Natural killer cell (primary cell): ENCODE measurements at regions of chr6 and their contacts with region 1.

Region 1: DNA sequence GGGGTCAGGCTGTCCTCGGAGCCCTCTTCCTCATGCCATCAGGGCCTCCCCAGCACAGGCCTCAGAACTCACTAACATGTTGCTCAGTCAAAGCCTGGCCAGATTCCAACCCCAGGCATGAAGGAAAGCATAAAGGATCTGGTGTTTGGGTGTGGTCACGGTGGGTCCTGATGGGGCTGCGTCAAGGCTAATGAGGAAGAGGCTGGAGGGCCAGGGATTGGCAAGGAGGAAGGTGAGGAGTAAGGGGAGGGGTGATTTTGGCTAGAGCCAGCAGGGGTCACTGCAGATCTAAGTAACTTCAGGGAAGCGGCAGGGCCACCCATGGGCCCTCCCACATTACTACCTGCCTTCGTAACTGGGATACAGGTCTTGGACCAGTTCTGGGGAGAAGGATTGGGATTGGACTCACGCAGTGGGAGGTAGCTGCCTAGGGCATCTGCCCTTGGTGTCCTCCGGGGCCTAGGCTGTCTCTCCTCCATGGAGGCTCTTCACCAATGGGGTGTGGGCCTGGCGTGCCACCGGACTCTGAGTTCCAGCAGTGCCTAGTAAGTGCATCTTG is 36.2 kb upstream of the MRPS18A start:
- DNase-seq: peak; percentile 57 to 85
- ATAC-seq: peak; percentile 68 to 77 (median 72)
- H3K4me3 ChIP-seq: no peak overlapping the region
- H3K4me3 Mint-ChIP-seq: no peak overlapping the region
- H3K27ac ChIP-seq: no peak overlapping the region
- H3K27ac Mint-ChIP-seq: peak overlapping the region in 1 of 2 donors; percentile 82
- H3K4me1 ChIP-seq: peaks cover 25% of the 10 kb centered on the region
- H3K4me1 Mint-ChIP-seq: peaks cover 14 to 25% of the 10 kb centered on the region in 2 donors
- H3K27me3 ChIP-seq: no peaks in the 10 kb centered on the region
- H3K27me3 Mint-ChIP-seq: peaks cover 11 to 18% of the 10 kb centered on the region in 2 donors
- CTCF ChIP-seq: peak; percentile 58

Region 2: DNA sequence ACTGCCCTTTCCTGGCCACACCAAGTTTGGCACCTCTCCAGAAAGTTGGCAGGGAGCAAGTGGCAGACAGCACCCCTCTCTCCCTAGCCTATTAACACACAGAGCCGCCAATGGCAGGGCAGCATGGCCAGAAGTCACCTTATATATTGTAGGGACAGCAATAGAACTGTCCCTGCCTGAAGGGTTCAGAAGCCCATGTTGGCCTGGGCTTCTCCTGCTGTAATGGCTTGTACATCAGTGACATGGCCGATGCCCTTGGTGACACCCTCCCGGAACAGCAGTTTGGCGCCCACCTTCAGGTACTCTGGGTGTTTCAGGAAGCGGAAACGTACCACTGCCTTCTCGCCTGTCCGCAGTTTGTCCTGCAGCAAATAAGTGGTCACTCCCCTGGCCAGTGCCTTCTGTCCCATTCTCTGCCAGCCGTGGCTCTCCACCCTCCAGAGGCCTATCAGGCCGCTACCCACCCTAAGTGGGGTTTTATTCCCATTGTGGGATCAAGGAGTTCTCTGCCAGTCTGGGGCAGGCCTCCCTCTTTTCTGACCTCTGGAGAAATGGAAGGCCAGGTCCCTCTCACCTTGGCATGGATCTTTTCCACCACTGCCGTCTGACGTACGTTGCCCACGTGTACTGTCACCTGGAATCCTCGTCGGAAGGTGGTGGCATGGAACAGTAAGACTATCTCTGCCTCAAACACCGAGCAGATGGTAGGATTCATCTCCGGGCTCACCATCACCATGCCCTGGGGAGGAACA is 102.2 kb before region 1 on chr6:
- intact Hi-C with region 1: no loop called
- DNase-seq: no peak
- ATAC-seq: no peak
- H3K4me3 ChIP-seq: no peak overlapping the region
- H3K4me3 Mint-ChIP-seq: no peak overlapping the region
- H3K27ac ChIP-seq: no peak overlapping the region
- H3K27ac Mint-ChIP-seq: no peak overlapping the region
- H3K4me1 ChIP-seq: peaks cover 7% of the 10 kb centered on the region
- H3K4me1 Mint-ChIP-seq: peaks cover 4 to 11% of the 10 kb centered on the region in 2 donors
- H3K27me3 ChIP-seq: no peaks in the 10 kb centered on the region
- H3K27me3 Mint-ChIP-seq: no peaks in the 10 kb centered on the region
- CTCF ChIP-seq: no peak

Region 3: GRCh38 chr6:43667245-43668150 is 56.3 kb before region 1 on chr6:
- intact Hi-C with region 1: loop called (anchors 2 kb)
- DNase-seq: peak; percentile 80 to 88
- ATAC-seq: peak; percentile 77 to 88 (median 82)
- H3K4me3 ChIP-seq: no peak overlapping the region
- H3K4me3 Mint-ChIP-seq: no peak overlapping the region
- H3K27ac ChIP-seq: no peak overlapping the region
- H3K27ac Mint-ChIP-seq: peak overlapping the region in 1 of 2 donors; percentile 79
- H3K4me1 ChIP-seq: peaks cover 17% of the 10 kb centered on the region
- H3K4me1 Mint-ChIP-seq: peaks cover 6 to 14% of the 10 kb centered on the region in 2 donors
- H3K27me3 ChIP-seq: no peaks in the 10 kb centered on the region
- H3K27me3 Mint-ChIP-seq: no peaks in the 10 kb centered on the region
- CTCF ChIP-seq: peak; percentile 83

Region 4: GRCh38 chr6:43874267-43874666 is 150.5 kb after region 1 on chr6:
- intact Hi-C with region 1: no loop called
- DNase-seq: no peak
- ATAC-seq: no peak
- H3K4me3 ChIP-seq: no peak overlapping the region
- H3K4me3 Mint-ChIP-seq: no peak overlapping the region
- H3K27ac ChIP-seq: no peak overlapping the region
- H3K27ac Mint-ChIP-seq: no peak overlapping the region
- H3K4me1 ChIP-seq: no peaks in the 10 kb centered on the region
- H3K4me1 Mint-ChIP-seq: no peaks in the 10 kb centered on the region
- H3K27me3 ChIP-seq: no peaks in the 10 kb centered on the region
- H3K27me3 Mint-ChIP-seq: peaks cover 5 to 8% of the 10 kb centered on the region in 2 donors
- CTCF ChIP-seq: no peak